Activated T-helper 1 cell treated with anti-CD3 and anti-CD28 coated beads, Interleukin-12 subunit alpha, Interleukin-12 subunit beta, Interleukin-2, Interleukin-4 antibody, amounts not matched to agents 30 ng/mL and 10 ng/mL and 1 ng/mL, durations not matched to agents 14 hours and 24 hours and 36 hours (primary cell): ENCODE measurements at regions of chr7 and their contacts with region 1.

Region 1: GRCh38 chr7:123865517-123866117 is 20.6 kb downstream of the HYAL4 start:
- DNase-seq: peak; percentile 9
- H3K4me3 Mint-ChIP-seq: no peak overlapping the region
- H3K27ac Mint-ChIP-seq: no peak overlapping the region
- H3K4me1 Mint-ChIP-seq: no peaks in the 10 kb centered on the region
- H3K27me3 Mint-ChIP-seq: no peaks in the 10 kb centered on the region

Region 2: DNA sequence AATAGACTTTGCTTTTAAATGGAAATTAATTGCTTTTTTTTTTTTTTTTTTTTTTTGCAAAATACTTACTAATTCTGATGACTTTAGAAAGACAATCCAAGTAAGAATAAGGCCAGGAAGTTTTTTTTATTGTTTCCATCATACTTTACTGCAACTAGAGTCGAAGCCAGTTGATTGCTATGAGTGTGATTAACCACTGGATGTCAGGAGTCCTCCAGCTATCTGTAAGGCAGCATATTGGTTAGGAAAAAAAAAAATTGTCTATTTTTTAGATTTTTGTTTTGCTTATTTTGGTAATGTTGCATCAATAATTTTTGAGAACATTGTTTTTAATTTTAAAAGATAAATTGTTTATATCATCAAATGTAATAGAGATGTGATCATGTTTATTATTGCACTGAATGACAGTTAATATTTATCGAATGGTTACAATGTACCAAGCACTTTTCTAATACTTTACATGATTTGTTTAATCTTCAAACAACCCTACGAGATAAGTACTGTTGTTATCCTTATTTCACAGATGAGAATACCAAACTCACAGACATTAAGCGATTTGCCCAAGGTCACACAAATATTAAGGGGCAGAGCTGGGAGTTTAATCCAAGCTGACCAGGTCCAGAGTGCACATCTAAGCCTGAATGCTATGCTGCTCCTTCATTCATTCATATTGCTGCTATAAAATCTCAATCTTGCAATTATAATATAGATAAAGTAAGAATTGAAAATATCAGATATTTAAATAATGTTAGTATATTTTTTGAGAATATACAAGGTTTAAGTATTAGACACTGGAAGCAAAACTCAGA is 229.9 kb before region 1 on chr7:
- intact Hi-C with region 1: loop called (anchors 1 kb)
- DNase-seq: no peak
- H3K4me3 Mint-ChIP-seq: no peak overlapping the region
- H3K27ac Mint-ChIP-seq: no peak overlapping the region
- H3K4me1 Mint-ChIP-seq: no peaks in the 10 kb centered on the region
- H3K27me3 Mint-ChIP-seq: peaks cover 8% of the 10 kb centered on the region

Region 3: GRCh38 chr7:123682690-123683089 is 182.9 kb before region 1 on chr7:
- intact Hi-C with region 1: loop called (anchors 1 kb)
- DNase-seq: no peak
- H3K4me3 Mint-ChIP-seq: no peak overlapping the region
- H3K27ac Mint-ChIP-seq: no peak overlapping the region
- H3K4me1 Mint-ChIP-seq: no peaks in the 10 kb centered on the region
- H3K27me3 Mint-ChIP-seq: no peaks in the 10 kb centered on the region

Region 4: GRCh38 chr7:123797673-123798527 is 67.7 kb before region 1 on chr7:
- intact Hi-C with region 1: loop called (anchors 1 kb)
- DNase-seq: no peak
- H3K4me3 Mint-ChIP-seq: no peak overlapping the region
- H3K27ac Mint-ChIP-seq: no peak overlapping the region
- H3K4me1 Mint-ChIP-seq: no peaks in the 10 kb centered on the region
- H3K27me3 Mint-ChIP-seq: no peaks in the 10 kb centered on the region

Region 5: DNA sequence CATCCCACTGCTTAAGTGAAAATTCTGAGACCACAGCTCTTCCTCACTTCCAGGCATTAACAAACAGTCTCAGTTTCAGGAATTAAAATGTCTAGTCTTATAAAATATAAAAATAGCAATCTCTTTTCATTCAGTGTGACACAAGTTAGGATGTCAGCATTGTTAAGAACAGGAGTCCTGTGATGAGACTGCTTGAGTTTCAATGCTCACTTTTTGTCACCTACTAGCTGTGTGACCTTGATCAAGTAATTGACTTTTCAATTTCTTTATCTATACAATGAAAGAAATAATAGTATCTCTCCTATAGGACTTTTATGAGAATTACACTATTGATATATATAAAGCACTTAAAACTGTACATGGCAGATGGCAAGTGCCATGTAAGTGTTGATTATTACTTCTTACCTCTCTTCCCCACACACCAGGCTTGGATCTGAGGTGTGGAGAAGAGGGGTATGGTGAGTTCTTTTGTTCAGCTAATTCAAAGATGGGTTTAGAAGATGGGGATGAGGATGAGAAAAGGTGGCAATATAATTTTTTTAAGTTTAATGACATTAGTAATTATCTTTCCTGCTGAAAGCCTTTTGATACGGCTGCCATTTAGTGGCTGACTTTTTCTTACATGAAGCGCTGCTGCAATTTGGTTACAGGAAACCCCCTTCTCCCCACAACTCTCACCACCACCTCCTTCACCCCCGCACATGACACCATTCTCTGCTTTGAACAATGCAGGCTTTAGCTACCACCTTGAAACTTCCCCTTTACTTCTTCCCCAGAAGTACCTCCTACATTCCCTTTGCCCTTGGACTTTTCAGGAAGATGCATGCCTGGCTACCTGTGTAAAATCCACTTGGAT is 41.5 kb before region 1 on chr7:
- intact Hi-C with region 1: loop called (anchors 1 kb)
- DNase-seq: peak; percentile 44
- H3K4me3 Mint-ChIP-seq: peak overlapping the region; percentile 38
- H3K27ac Mint-ChIP-seq: peak overlapping the region; percentile 77
- H3K4me1 Mint-ChIP-seq: peaks cover 25% of the 10 kb centered on the region
- H3K27me3 Mint-ChIP-seq: peaks cover 7% of the 10 kb centered on the region

Region 6: DNA sequence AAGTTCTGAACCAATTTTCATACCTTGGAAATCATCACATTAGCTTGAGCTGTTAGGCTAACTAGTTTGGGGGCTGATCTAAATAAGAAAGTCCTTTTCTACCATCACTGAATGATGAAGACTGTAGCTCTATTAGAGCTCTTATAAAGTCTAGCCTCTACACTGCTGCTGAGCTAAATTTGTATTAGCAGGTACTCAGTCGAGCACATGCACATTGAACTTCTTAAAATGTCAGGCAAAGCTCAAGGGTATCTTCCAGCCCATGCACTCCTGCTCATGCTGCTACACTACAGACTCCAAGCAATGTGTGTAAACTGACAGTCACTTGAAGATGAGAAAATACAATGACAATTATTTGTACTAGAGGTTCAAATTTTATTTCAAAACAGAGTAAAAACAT is 326.1 kb after region 1 on chr7:
- intact Hi-C with region 1: no loop called
- DNase-seq: no peak
- H3K4me3 Mint-ChIP-seq: no peak overlapping the region
- H3K27ac Mint-ChIP-seq: no peak overlapping the region
- H3K4me1 Mint-ChIP-seq: no peaks in the 10 kb centered on the region
- H3K27me3 Mint-ChIP-seq: no peaks in the 10 kb centered on the region

Region 7: GRCh38 chr7:124364283-124364682 is 498.7 kb after region 1 on chr7:
- intact Hi-C with region 1: no loop called
- DNase-seq: no peak
- H3K4me3 Mint-ChIP-seq: no peak overlapping the region
- H3K27ac Mint-ChIP-seq: no peak overlapping the region
- H3K4me1 Mint-ChIP-seq: no peaks in the 10 kb centered on the region
- H3K27me3 Mint-ChIP-seq: no peaks in the 10 kb centered on the region

Region 8: DNA sequence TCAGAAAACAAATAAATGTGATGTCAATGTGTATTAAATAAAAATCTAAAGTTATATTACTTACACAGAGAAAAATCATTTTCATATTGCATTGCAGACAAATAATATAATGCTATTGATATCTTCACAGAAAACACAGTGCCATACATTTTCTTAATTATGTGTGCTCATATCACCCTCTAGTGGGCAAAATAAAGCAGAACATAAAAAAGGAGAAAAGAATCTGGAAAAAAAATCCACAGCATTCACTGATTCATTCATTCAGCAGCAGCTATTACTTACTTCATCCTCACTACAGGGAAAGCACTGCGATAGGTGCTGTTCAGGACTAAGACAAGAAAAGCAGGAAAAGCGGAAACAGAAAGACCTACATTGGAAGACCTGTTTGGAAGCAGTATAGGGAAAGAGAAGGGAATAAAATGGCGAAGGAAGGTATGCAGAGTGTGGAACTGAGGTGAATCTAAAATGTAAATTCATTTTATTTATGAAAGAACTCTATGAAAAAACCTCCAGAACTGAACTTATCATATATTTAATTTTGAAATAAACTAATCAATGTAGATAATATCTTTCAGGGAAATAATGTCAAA is 990.8 kb after region 1 on chr7:
- intact Hi-C with region 1: loop called (anchors 1 kb)
- DNase-seq: no peak
- H3K4me3 Mint-ChIP-seq: no peak overlapping the region
- H3K27ac Mint-ChIP-seq: no peak overlapping the region
- H3K4me1 Mint-ChIP-seq: no peaks in the 10 kb centered on the region
- H3K27me3 Mint-ChIP-seq: no peaks in the 10 kb centered on the region